ENCODE measurements at regions of chr14 and their contacts with region 1.

Region 1: DNA sequence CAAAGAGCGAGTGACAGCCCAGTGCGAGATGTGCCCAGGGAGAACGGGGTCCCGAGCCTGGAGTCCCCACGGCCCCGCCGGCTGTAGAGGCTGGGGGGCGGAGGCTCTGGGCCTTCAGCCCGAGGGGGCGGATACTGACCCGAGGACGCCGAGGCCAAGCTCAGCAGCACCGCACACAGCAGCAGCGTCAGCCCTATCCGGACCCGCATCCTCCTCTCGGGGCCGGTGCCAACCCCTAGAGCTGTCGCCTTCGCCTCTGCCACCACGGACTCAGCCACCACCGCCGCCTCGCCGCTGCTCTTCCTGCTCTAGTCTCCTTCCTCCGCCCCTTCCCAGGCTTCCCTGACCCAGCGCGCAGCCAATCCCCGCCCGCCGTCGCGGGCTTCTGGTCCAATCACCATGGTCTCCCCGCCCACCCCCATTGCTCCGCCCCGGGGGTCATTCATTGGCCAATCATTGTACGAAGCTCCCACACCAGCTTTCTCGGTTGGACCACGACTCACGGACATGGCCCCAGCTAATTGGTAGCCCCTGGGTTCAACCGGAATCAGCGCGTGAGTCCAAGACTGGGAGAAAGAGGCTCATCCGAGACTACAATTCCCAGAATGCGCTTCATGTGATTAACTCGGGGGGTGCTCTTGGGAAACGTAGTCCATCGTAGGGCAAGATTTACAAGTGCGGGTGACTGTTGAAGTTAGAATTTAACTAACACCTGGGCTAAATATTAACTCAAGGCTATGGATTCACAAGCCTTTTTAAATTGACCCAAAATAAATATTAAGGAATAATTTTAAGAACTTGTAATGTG is at the start of gene SEL1L:
- DNase-seq: peak; percentile 99
- H3K4me3 Mint-ChIP-seq: peak within 1 kb of the TSS; percentile 93
- H3K27ac Mint-ChIP-seq: peak within 1 kb of the TSS; percentile 83
- H3K4me1 Mint-ChIP-seq: peaks cover 36% of the 10 kb centered on the region
- H3K27me3 Mint-ChIP-seq: no peaks in the 10 kb centered on the region
- total RNA-seq, gene SEL1L: 51.7 and 52.6 TPM in 2 replicates

Region 2: DNA sequence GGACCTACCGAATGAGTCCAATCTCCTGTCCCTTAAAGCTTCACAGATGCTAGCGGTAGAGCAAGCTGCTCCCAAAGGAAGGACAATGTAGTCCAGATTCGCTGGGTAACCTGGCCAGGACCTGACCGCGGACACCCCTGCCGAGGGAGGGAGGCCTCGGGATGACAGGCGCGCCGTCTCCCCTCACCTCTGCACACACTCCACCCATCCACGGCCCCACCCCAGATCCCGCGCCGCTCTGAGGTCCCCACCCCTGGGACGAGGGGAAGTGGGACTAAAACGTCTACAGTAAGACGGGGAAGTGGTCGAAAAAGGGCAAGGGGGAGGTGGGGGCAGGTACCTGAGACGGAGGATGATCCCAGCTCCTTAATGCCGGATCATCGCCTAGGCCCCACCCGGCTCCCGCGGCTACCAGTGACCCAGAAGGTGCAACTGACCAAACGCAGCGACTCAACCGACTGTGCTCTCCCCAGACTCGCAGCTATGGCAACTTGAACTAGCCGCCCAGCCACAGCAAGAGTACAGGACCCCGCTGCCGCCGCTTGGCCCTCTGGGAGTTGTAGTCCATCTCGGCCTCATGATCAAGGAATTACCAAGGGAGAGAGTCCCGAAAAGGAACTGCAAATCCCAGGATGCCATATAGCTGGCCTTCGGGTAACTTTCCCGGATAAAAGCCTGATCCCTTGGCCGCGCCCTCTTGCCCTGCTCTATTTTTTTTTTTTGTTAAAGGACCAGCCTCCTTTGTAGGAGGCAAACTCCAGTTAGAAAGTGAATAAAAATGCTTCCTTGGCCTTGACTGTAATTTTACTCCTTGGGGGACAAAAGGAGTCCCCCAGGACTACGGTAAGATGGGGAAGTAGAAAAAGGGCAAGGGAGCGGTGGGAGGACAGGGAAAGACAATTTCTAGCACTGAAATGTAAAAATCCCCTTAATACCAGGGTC is 592.2 kb before region 1 on chr14 and contains the start of gene CEP128:
- intact Hi-C with region 1: loop called (anchors 5 kb)
- DNase-seq: peak; percentile 79
- H3K4me3 Mint-ChIP-seq: peak within 1 kb of the TSS; percentile 87
- H3K27ac Mint-ChIP-seq: peak within 1 kb of the TSS; percentile 70
- H3K4me1 Mint-ChIP-seq: peaks cover 33% of the 10 kb centered on the region
- H3K27me3 Mint-ChIP-seq: peaks cover 2% of the 10 kb centered on the region
- total RNA-seq, gene CEP128: 18.0 and 20.7 TPM in 2 replicates

Region 3: GRCh38 chr14:81220830-81221578 is 312.7 kb before region 1 on chr14 and contains the start of gene GTF2A1:
- intact Hi-C with region 1: loop called (anchors 1 kb)
- DNase-seq: peak; percentile 95
- H3K4me3 Mint-ChIP-seq: peak within 1 kb of the TSS; percentile 100
- H3K27ac Mint-ChIP-seq: peak within 1 kb of the TSS; percentile 100
- H3K4me1 Mint-ChIP-seq: peaks cover 30% of the 10 kb centered on the region
- H3K27me3 Mint-ChIP-seq: peaks cover 2% of the 10 kb centered on the region
- total RNA-seq, gene GTF2A1: 41.2 and 45.1 TPM in 2 replicates

Region 4: GRCh38 chr14:81474148-81474492 is 59.6 kb before region 1 on chr14:
- intact Hi-C with region 1: loop called (anchors 1 kb)
- DNase-seq: no peak
- H3K4me3 Mint-ChIP-seq: peak overlapping the region; percentile 62
- H3K27ac Mint-ChIP-seq: peak overlapping the region; percentile 66
- H3K4me1 Mint-ChIP-seq: peaks cover 50% of the 10 kb centered on the region
- H3K27me3 Mint-ChIP-seq: no peaks in the 10 kb centered on the region

Region 5: DNA sequence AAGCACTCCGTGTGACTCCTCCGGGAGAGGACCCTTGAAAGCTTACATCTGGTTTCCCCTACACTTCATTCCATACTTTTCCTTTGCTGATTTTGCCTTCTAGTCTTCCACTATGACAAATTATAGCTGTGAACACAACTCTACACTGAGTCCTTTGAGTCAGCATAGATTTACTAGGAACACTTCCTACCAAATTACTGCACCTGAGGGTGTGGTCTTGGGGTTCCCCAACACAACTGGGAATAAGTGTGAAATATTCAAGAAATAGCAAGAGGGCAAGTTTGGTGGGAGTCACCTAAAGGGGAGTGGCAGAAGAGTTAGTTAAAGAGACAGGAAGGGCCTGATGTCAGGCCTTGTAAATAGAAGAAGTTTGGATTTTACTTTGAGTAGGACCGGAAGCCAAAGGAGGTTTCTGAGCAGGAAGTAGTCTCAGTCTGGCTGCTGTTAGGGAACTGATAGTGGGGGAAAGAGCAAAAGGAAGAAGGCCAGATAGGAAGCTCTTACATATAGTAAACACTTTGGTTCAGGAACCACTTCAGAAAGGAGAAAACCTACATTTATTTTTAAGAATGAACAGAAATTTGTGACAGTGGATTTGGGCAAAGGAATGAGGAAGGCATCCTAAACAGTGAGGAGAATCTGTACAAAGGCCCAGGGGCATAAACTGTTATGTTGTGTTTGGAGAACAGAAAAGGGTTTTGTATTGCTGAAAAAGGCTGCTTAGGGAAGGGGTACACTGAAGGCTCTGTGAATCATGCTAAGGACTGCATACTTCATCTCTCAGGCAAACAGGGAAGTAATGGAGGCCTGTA is 14.3 kb before region 1 on chr14:
- intact Hi-C with region 1: loop called (anchors 2 kb)
- DNase-seq: no peak
- H3K4me3 Mint-ChIP-seq: peak overlapping the region; percentile 13
- H3K27ac Mint-ChIP-seq: peak overlapping the region; percentile 70
- H3K4me1 Mint-ChIP-seq: peaks cover 22% of the 10 kb centered on the region
- H3K27me3 Mint-ChIP-seq: no peaks in the 10 kb centered on the region

Region 6: GRCh38 chr14:81550001-81550637 is 16.4 kb after region 1 on chr14:
- intact Hi-C with region 1: loop called (anchors 1 kb)
- DNase-seq: no peak
- H3K4me3 Mint-ChIP-seq: no peak overlapping the region
- H3K27ac Mint-ChIP-seq: no peak overlapping the region
- H3K4me1 Mint-ChIP-seq: peaks cover 24% of the 10 kb centered on the region
- H3K27me3 Mint-ChIP-seq: no peaks in the 10 kb centered on the region

Region 7: GRCh38 chr14:81655423-81656314 is 121.9 kb after region 1 on chr14:
- intact Hi-C with region 1: no loop called
- DNase-seq: no peak
- H3K4me3 Mint-ChIP-seq: no peak overlapping the region
- H3K27ac Mint-ChIP-seq: no peak overlapping the region
- H3K4me1 Mint-ChIP-seq: no peaks in the 10 kb centered on the region
- H3K27me3 Mint-ChIP-seq: no peaks in the 10 kb centered on the region

Measured in activated T-helper 2 cell treated with anti-CD3 and anti-CD28 coated beads, Interferon-gamma antibody, Interleukin-2, Interleukin-4, amounts not matched to agents 10 μg/mL and 5 μg/mL and 100 μg/mL, durations not matched to agents 14 hours and 24 hours and 36 hours (primary cell).